ENCODE measurements at regions of chr2 and their contacts with region 1.

Region 1: GRCh38 chr2:217875138-217875537 is 127.7 kb downstream of the TNS1 start:
- DNase-seq: no peak
- H3K4me3 ChIP-seq: no peak overlapping the region
- H3K27ac ChIP-seq: peak overlapping the region; percentile 56 to 62
- H3K4me1 ChIP-seq: peaks cover 0 to 48% of the 10 kb centered on the region in 2 donors
- H3K27me3 ChIP-seq: no peaks in the 10 kb centered on the region
- CTCF ChIP-seq: no peak

Region 2: GRCh38 chr2:217858519-217859491 is 16.3 kb before region 1 on chr2:
- intact Hi-C with region 1: loop called (anchors 2 kb)
- DNase-seq: peak; percentile 47 to 96
- H3K4me3 ChIP-seq: peak overlapping the region; percentile 48 to 49
- H3K27ac ChIP-seq: peak overlapping the region; percentile 87 to 89
- H3K4me1 ChIP-seq: peaks cover 68 to 94% of the 10 kb centered on the region in 2 donors
- H3K27me3 ChIP-seq: no peaks in the 10 kb centered on the region
- CTCF ChIP-seq: no peak

Region 3: GRCh38 chr2:217909156-217909820 is 34.1 kb after region 1 on chr2:
- intact Hi-C with region 1: no loop called
- DNase-seq: no peak
- H3K4me3 ChIP-seq: peak overlapping the region in 1 of 2 donors; percentile 7
- H3K27ac ChIP-seq: peak overlapping the region; percentile 98 to 100
- H3K4me1 ChIP-seq: peaks cover 67 to 100% of the 10 kb centered on the region in 2 donors
- H3K27me3 ChIP-seq: no peaks in the 10 kb centered on the region
- CTCF ChIP-seq: peak in 1 of 3 experiments; percentile 15

Region 4: DNA sequence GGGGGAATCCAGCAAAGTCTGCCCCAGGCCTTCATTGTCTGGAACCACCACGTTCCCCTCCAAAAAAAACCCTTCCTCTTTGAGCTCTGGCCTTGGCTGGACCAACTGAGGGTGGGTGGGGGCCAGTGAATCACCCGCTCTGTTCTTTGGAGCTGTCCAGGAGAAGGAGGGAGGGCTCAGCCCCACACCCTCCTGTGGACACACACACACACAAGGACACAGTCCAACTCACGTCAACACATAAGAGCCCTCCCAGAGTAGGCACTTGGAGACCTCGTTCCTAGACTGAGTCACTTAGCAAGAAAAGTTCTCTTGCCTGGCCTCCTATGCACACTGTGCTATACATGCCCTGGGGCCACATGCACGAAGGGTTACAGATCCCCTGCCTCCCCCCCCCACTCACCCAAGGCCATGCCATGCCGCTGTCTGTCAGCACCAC is 128.9 kb after region 1 on chr2:
- intact Hi-C with region 1: no loop called
- DNase-seq: peak; percentile 93 to 97
- H3K4me3 ChIP-seq: peak overlapping the region in 1 of 2 donors; percentile 69
- H3K27ac ChIP-seq: peak overlapping the region; percentile 89 to 91
- H3K4me1 ChIP-seq: peaks cover 10 to 60% of the 10 kb centered on the region in 2 donors
- H3K27me3 ChIP-seq: no peaks in the 10 kb centered on the region
- CTCF ChIP-seq: no peak

Measured in ascending aorta (tissue), 2 donors.